ENCODE measurements at regions of chr12 and their contacts with region 1.

Region 1: DNA sequence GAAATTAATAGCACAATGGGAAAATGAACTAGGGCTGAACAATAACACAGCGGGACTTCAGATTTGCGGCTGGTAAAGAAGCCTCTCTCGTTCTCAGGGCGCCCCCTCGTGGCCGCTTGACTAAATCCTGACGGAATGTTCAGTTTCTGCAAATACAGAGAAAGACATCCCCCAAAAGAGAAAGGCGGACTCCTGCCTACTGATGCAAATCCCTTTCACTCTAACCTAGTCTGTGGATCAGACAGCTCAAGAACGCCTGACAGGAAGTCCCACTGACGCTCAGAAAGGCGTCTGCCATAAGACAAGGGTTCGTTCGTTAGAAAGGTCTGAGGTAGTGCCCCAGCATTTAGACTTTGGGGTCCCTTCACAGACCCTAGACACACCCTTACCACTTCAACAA is 2.5 kb downstream of the NUAK1 start:
- DNase-seq: peak; percentile 45 to 84 (median 70)
- ATAC-seq: peak; percentile 35
- H3K4me3 ChIP-seq: peak overlapping the region in 1 of 2 experiments; percentile 22
- H3K4me3 Mint-ChIP-seq: no peak overlapping the region
- H3K27ac ChIP-seq: no peak overlapping the region
- H3K27ac Mint-ChIP-seq: no peak overlapping the region
- H3K4me1 ChIP-seq: peaks cover 13% of the 10 kb centered on the region
- H3K4me1 Mint-ChIP-seq: peaks cover 15% of the 10 kb centered on the region
- H3K27me3 ChIP-seq: peaks cover 13 to 28% of the 10 kb centered on the region in 2 experiments
- H3K27me3 Mint-ChIP-seq: peaks cover 58% of the 10 kb centered on the region
- CTCF ChIP-seq: peak; percentile 76

Region 2: GRCh38 chr12:104201238-104202001 is 1934.8 kb before region 1 on chr12:
- CTCF ChIA-PET with region 1: no interaction called
- POLR2A ChIA-PET with region 1: no interaction called
- intact Hi-C with region 1: loop called in 1 of 2 experiments (anchors 10 kb)
- DNase-seq: peak; percentile 7 to 80 (median 39)
- ATAC-seq: peak; percentile 57
- H3K4me3 ChIP-seq: no peak overlapping the region
- H3K4me3 Mint-ChIP-seq: no peak overlapping the region
- H3K27ac ChIP-seq: no peak overlapping the region
- H3K27ac Mint-ChIP-seq: no peak overlapping the region
- H3K4me1 ChIP-seq: no peaks in the 10 kb centered on the region
- H3K4me1 Mint-ChIP-seq: peaks cover 2% of the 10 kb centered on the region
- H3K27me3 ChIP-seq: no peaks in the 10 kb centered on the region
- H3K27me3 Mint-ChIP-seq: peaks cover 15% of the 10 kb centered on the region
- CTCF ChIP-seq: peak; percentile 87

Region 3: GRCh38 chr12:105420659-105421240 is 715.5 kb before region 1 on chr12:
- CTCF ChIA-PET with region 1: interaction called, 60 read pairs
- POLR2A ChIA-PET with region 1: interaction called, 3 read pairs
- intact Hi-C with region 1: loop called in 1 of 2 experiments (anchors 1 kb)
- DNase-seq: peak; percentile 12 to 74 (median 55)
- ATAC-seq: peak; percentile 46
- H3K4me3 ChIP-seq: no peak overlapping the region
- H3K4me3 Mint-ChIP-seq: no peak overlapping the region
- H3K27ac ChIP-seq: no peak overlapping the region
- H3K27ac Mint-ChIP-seq: no peak overlapping the region
- H3K4me1 ChIP-seq: no peaks in the 10 kb centered on the region
- H3K4me1 Mint-ChIP-seq: no peaks in the 10 kb centered on the region
- H3K27me3 ChIP-seq: no peaks in the 10 kb centered on the region
- H3K27me3 Mint-ChIP-seq: no peaks in the 10 kb centered on the region
- CTCF ChIP-seq: peak; percentile 91

Region 4: GRCh38 chr12:105967038-105967776 is 169.1 kb before region 1 on chr12:
- CTCF ChIA-PET with region 1: no interaction called
- POLR2A ChIA-PET with region 1: no interaction called
- intact Hi-C with region 1: no loop called
- DNase-seq: no peak
- ATAC-seq: no peak
- H3K4me3 ChIP-seq: no peak overlapping the region
- H3K4me3 Mint-ChIP-seq: no peak overlapping the region
- H3K27ac ChIP-seq: no peak overlapping the region
- H3K27ac Mint-ChIP-seq: no peak overlapping the region
- H3K4me1 ChIP-seq: no peaks in the 10 kb centered on the region
- H3K4me1 Mint-ChIP-seq: no peaks in the 10 kb centered on the region
- H3K27me3 ChIP-seq: no peaks in the 10 kb centered on the region
- H3K27me3 Mint-ChIP-seq: no peaks in the 10 kb centered on the region
- CTCF ChIP-seq: no peak

Region 5: GRCh38 chr12:106118386-106119130 is 17.7 kb before region 1 on chr12:
- CTCF ChIA-PET with region 1: interaction called, 39 read pairs
- POLR2A ChIA-PET with region 1: no interaction called
- intact Hi-C with region 1: no loop called
- DNase-seq: no peak
- ATAC-seq: no peak
- H3K4me3 ChIP-seq: no peak overlapping the region
- H3K4me3 Mint-ChIP-seq: no peak overlapping the region
- H3K27ac ChIP-seq: no peak overlapping the region
- H3K27ac Mint-ChIP-seq: no peak overlapping the region
- H3K4me1 ChIP-seq: no peaks in the 10 kb centered on the region
- H3K4me1 Mint-ChIP-seq: no peaks in the 10 kb centered on the region
- H3K27me3 ChIP-seq: no peaks in the 10 kb centered on the region
- H3K27me3 Mint-ChIP-seq: no peaks in the 10 kb centered on the region
- CTCF ChIP-seq: no peak

Region 6: DNA sequence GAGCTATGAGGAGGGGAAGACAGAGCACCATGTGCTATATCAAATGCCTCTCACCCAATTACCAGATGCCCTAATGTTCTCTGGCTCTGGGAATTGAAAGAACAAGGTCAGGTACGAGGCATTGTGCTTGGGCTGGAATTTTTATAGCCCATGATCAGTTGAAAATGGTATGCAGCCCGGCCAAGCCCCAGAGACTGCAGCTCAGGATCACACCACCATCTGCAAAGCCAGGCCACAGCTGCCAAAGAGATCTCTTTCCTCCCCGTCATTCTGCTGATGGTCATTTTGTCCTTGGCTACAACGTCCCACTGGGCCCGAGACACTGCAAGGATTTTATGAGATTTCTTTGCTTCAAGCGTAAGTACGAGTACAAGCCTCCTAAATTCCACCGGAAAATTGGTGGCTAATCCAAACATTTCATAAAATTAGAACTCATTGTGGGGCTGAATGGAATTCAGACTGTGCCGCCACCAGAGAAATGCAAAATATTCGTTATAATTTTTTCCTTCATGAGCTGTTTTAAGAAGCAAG is 12.6 kb before region 1 on chr12:
- CTCF ChIA-PET with region 1: interaction called, 39 read pairs
- POLR2A ChIA-PET with region 1: no interaction called
- intact Hi-C with region 1: no loop called
- DNase-seq: no peak
- ATAC-seq: no peak
- H3K4me3 ChIP-seq: no peak overlapping the region
- H3K4me3 Mint-ChIP-seq: no peak overlapping the region
- H3K27ac ChIP-seq: no peak overlapping the region
- H3K27ac Mint-ChIP-seq: no peak overlapping the region
- H3K4me1 ChIP-seq: no peaks in the 10 kb centered on the region
- H3K4me1 Mint-ChIP-seq: no peaks in the 10 kb centered on the region
- H3K27me3 ChIP-seq: no peaks in the 10 kb centered on the region
- H3K27me3 Mint-ChIP-seq: peaks cover 3% of the 10 kb centered on the region
- CTCF ChIP-seq: no peak

Region 7: DNA sequence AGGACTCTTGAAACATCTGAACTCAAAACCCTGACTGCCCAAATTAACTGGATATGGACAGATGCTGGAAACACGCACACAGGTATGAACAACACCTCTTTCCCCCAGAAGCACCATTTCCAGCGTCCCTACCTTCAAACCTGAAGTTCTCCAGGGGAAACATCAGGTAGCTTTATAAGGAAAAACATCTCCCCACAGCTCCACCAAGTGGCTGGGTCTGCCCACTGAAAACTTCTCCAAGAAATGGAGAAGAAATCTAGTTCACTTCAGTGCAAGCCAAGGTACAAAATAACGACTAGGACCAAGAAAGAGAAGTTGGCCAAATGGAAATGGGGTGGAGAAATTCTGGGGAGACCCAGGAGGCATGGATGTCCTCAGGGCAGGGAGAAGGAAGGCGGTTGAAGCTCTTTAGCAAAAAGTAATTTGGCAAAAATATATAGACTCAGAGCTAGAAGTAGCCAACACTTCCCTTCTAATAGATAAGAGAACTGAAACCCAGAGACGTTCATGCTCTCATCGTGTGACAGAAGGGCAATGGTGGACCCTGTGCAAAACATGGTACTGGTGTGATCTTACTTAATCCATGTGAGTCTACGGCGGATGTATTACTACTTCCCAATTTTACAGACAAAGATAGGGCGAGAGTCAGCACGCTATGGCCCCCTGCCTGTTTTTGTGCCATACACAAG is 13.0 kb after region 1 on chr12:
- CTCF ChIA-PET with region 1: interaction called, 41 read pairs
- POLR2A ChIA-PET with region 1: no interaction called
- intact Hi-C with region 1: no loop called
- DNase-seq: peak in 1 of 9 experiments; percentile 17
- ATAC-seq: no peak
- H3K4me3 ChIP-seq: no peak overlapping the region
- H3K4me3 Mint-ChIP-seq: no peak overlapping the region
- H3K27ac ChIP-seq: no peak overlapping the region
- H3K27ac Mint-ChIP-seq: no peak overlapping the region
- H3K4me1 ChIP-seq: no peaks in the 10 kb centered on the region
- H3K4me1 Mint-ChIP-seq: no peaks in the 10 kb centered on the region
- H3K27me3 ChIP-seq: no peaks in the 10 kb centered on the region
- H3K27me3 Mint-ChIP-seq: peaks cover 25% of the 10 kb centered on the region
- CTCF ChIP-seq: no peak